ENCODE measurements at regions of chr6 and their contacts with region 1.

Region 1: DNA sequence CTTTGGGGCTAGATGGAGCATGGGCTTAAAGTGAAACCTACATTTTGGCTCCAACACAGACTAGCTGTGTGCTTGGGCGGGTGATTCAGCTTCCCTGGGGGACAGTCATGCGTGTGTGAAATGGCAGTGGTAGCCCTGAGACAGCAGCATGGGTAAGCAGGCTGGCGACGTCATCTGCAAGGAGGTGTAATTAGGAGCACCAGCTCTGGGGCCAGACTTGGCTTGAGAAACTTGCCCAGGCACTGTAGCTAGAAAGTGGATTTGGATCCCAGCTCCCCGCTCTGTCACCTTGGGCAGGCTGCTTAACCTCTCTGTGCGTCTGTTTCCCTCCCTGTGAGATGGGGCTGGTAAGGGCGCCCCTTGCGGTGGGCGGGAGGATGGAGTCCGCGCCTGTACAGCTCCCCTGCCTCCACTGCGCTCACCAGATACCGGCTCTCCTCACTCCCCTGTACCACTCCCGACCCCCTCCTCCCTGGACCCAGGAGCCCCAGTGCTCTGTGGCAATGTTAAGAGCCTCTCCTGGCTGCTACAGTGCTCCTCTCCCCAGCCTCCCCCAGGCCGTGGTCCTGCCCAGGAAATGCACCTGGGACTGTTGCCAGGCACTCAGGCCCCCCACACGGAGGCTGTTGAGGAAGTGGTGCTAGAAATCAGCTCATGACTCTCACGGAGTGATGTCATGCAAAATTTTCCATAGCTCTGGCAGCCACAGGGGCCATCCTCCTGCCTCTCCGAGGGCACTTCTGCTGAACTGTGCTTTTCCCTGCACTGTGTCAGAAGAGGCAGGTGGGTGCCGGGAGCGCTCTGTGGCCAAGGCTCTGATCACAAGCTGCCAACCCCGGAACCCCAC is 44.6 kb downstream of the SYNJ2 start:
- DNase-seq: peak in 1 of 2 experiments; percentile 80
- H3K4me3 ChIP-seq: no peak overlapping the region
- H3K27ac ChIP-seq: no peak overlapping the region
- H3K4me1 ChIP-seq: peaks cover 0 to 10% (median 4%) of the 10 kb centered on the region in 4 experiments; a peak in 3 of 7 replicates
- H3K27me3 ChIP-seq: no peaks in the 10 kb centered on the region
- CTCF ChIP-seq: peak in 2 of 3 experiments; percentile 52 to 75; a peak in 3 of 4 replicates
- EP300 ChIP-seq: no peak
- POLR2A ChIP-seq: no peak
- RAD21 ChIP-seq: peak; percentile 37 to 52; a peak in 3 of 4 replicates

Region 2: DNA sequence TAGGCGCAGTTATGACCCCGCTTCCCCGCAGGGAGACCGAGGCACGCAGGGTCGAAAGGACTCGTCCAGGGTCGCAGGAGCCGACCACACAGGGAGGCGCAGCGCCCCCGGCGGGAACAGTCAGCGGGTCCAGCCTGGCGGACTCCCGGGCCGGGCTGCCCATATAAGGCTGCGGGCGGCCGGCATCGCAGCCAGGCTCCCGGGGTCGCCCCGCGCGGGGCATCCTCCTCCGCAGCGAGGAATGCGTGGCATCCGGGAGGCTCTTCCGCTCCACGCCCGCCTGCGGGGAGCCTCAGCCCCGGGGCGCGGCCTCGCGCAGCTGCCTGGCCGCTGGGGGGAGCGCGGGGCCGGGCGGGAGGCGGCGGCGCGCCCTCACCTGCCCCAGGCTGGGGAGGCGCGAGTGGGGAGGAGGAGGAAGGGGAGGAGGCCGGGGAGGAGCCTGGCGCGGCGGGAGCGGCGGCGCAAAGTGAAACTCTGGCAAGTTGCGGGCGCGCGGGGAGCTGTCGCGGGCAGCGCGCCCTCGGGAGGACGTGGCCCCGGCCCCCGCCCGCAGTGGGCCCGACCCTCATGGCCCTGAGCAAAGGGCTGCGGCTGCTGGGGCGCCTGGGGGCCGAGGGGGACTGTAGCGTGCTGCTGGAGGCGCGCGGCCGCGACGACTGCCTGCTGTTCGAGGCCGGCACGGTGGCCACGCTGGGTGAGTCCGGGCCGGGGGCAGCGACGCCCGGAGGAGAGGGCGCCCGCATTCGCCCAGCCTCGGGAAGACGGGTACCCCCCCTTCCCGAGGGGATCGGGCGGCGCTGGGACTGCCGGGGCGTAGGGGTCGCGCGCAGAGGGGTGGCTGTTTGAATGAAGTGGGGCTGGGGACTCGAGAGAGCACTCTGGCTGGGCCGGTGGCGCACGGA is 44.6 kb before region 1 on chr6 and contains the start of gene SYNJ2:
- CTCF ChIA-PET with region 1: interaction called, 10 read pairs
- POLR2A ChIA-PET with region 1: no interaction called
- DNase-seq: peak; percentile 57 to 82
- H3K4me3 ChIP-seq: peak within 1 kb of the TSS; percentile 50 to 81 (median 62)
- H3K27ac ChIP-seq: peak within 1 kb of the TSS; percentile 75; the same call in 1 of the 2 replicates
- H3K4me1 ChIP-seq: peaks cover 4 to 24% (median 20%) of the 10 kb centered on the region in 4 experiments
- H3K27me3 ChIP-seq: peaks cover 0 to 16% (median 11%) of the 10 kb centered on the region in 4 experiments; a peak in 5 of 7 replicates
- CTCF ChIP-seq: peak in 2 of 3 experiments; percentile 40 to 44; a peak in 3 of 4 replicates
- EP300 ChIP-seq: no peak
- POLR2A ChIP-seq: peak in 1 of 2 experiments; percentile 48; a peak in 1 of 3 replicates
- RAD21 ChIP-seq: peak; percentile 13 to 21; a peak in 2 of 4 replicates
- total RNA-seq, gene SYNJ2: 13.5 and 13.9 TPM in 2 replicates

Region 3: GRCh38 chr6:157995458-157995857 is 30.8 kb before region 1 on chr6:
- CTCF ChIA-PET with region 1: interaction called, 13 read pairs
- POLR2A ChIA-PET with region 1: interaction called, 3 read pairs
- DNase-seq: no peak
- H3K4me3 ChIP-seq: no peak overlapping the region
- H3K27ac ChIP-seq: no peak overlapping the region
- H3K4me1 ChIP-seq: peaks cover 6 to 9% (median 8%) of the 10 kb centered on the region in 4 experiments
- H3K27me3 ChIP-seq: no peaks in the 10 kb centered on the region
- CTCF ChIP-seq: no peak
- EP300 ChIP-seq: no peak
- POLR2A ChIP-seq: no peak
- RAD21 ChIP-seq: no peak

Region 4: DNA sequence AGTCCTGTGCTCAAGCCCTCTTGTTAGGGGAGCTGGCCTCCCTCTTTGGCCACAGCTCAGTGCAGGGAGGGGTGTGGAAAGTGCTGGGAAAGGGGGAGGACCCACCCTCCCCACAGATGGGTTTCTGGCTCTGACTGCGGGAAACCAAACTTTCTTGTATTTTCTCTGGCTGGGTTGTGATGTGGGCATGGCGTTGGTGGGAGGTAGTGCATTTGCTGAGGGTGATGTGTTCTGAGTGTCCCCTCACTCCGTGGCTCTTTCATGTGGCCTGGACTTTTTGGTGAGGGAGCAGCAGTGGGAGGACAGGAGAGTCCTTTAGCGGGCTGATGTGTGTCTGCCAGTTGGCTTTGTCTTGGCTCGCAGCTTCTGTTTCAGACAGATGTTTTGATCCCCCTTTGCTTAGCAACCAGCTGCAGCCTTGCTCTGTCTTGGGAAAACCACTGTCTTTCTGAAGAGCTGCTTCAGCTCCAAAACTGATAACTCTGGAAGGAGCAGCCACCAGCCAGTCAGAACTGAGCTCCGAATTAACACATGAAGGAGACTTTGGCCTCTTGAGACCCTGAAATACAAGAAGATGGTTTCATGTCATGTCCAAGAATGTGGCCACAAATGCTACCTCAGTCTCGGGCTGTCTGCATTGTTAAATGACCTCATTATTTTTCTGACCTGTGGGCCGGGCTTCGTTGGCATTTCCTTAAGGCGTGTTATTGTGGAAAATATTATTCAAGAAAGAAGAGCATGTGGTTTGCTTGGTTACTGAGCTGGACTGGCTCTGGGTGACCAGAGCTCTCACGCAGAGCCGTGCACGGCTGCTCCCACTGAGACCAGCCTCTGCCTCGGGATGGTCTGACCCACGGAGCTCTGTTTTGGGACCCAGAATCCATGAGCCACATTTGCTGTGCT is 23.1 kb before region 1 on chr6:
- CTCF ChIA-PET with region 1: interaction called, 13 read pairs
- POLR2A ChIA-PET with region 1: interaction called, 3 read pairs
- DNase-seq: no peak
- H3K4me3 ChIP-seq: no peak overlapping the region
- H3K27ac ChIP-seq: no peak overlapping the region
- H3K4me1 ChIP-seq: peaks cover 4 to 15% (median 6%) of the 10 kb centered on the region in 4 experiments
- H3K27me3 ChIP-seq: no peaks in the 10 kb centered on the region
- CTCF ChIP-seq: no peak
- EP300 ChIP-seq: no peak
- POLR2A ChIP-seq: no peak
- RAD21 ChIP-seq: no peak

Region 5: DNA sequence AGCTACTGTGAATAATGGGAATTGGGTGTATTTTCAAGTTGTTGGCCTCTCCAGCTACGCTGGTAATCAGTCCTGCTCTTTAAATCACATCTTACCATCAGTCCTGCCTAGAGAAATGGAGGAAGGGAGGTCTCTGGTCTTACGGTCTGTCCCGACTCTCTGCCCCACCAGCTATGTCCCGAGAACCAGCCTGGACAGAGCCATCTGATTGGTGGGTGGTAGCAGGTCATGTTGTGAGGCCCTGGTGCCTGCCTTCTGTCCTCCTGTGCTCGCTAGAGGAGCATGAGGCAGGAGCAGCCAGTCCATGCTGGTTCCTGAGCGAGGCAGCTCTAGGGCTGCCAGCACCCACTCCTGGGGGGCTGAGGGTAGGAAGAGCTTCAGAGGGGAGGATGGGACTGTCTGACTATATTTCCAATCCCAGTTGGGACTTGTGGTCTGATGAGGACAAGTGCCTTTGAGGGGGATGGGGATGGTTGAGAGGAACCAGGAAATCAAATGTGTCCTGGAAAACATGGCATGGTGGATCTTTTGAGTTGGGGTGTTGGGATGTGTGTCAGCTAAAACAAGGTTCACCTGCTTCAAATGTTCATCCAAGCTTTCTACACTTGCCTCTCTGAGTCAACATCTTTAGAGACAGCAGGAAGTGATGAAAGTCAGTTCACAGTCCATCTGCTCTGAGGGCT is 11.6 kb before region 1 on chr6:
- CTCF ChIA-PET with region 1: interaction called, 22 read pairs
- POLR2A ChIA-PET with region 1: interaction called, 7 read pairs
- DNase-seq: no peak
- H3K4me3 ChIP-seq: no peak overlapping the region
- H3K27ac ChIP-seq: no peak overlapping the region
- H3K4me1 ChIP-seq: peaks cover 0 to 4% (median 0%) of the 10 kb centered on the region in 4 experiments; a peak in 2 of 7 replicates
- H3K27me3 ChIP-seq: no peaks in the 10 kb centered on the region
- CTCF ChIP-seq: no peak
- EP300 ChIP-seq: no peak
- POLR2A ChIP-seq: no peak
- RAD21 ChIP-seq: no peak

Region 6: DNA sequence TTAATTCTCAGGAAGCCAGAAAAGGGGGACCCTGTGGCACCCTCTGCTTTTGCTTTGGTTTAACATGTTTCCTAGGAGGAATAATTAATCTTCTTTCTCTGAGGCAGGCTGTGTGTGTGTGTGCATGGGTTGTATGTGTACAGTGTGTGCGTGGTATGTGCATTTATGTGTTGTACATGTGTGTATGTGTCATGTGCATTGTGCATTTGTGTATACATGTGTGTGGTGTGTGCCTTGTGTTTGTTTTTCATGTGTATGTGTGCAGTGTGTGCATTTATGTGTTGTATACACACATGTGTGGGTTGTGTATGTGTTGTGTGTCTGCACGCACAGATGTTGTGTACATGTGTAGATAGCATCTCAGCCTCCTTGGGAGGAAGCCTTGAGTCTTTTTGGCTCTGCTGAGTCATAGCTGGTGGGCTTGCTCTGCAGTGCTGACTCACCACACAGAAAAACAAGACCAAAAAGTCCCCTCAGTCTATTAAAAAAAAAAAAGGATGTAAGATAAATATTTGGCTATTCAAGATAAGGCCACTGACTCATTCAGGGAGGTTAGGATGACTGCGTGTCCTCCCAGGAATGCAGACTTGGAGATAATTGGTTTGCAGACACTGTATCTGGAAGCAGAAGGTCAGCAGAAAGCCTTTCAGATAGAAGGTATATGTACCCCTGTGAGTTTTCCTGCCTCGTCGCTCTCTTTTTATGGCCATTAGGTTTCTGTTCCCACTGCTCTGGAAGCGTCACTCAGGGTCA is 13.9 kb after region 1 on chr6:
- CTCF ChIA-PET with region 1: interaction called, 11 read pairs
- POLR2A ChIA-PET with region 1: interaction called, 4 read pairs
- DNase-seq: no peak
- H3K4me3 ChIP-seq: no peak overlapping the region
- H3K27ac ChIP-seq: no peak overlapping the region
- H3K4me1 ChIP-seq: peaks cover 0 to 10% (median 6%) of the 10 kb centered on the region in 4 experiments; a peak in 5 of 7 replicates
- H3K27me3 ChIP-seq: no peaks in the 10 kb centered on the region
- CTCF ChIP-seq: no peak
- EP300 ChIP-seq: no peak
- POLR2A ChIP-seq: no peak
- RAD21 ChIP-seq: no peak

Measured in H1 (cell line).